Activated CD4-positive, alpha-beta memory T cell treated with anti-CD3 and anti-CD28 coated beads for 36 hours (primary cell): ENCODE measurements at regions of chr5 and their contacts with region 1.

Region 1: GRCh38 chr5:180802325-180803180 is at the start of gene MGAT1:
- DNase-seq: peak; percentile 84
- H3K4me3 Mint-ChIP-seq: peak within 1 kb of the TSS; percentile 85
- H3K27ac Mint-ChIP-seq: peak within 1 kb of the TSS; percentile 96
- H3K4me1 Mint-ChIP-seq: peaks cover 75% of the 10 kb centered on the region
- H3K27me3 Mint-ChIP-seq: no peaks in the 10 kb centered on the region
- total RNA-seq, gene MGAT1: 101 to 106 TPM

Region 2: GRCh38 chr5:180825768-180826525 is 23.4 kb after region 1 on chr5:
- CTCF ChIA-PET with region 1: interaction called, 32 read pairs
- POLR2A ChIA-PET with region 1: interaction called, 44 read pairs
- intact Hi-C with region 1: no loop called
- DNase-seq: peak; percentile 79
- H3K4me3 Mint-ChIP-seq: no peak overlapping the region
- H3K27ac Mint-ChIP-seq: peak overlapping the region; percentile 64
- H3K4me1 Mint-ChIP-seq: peaks cover 34% of the 10 kb centered on the region
- H3K27me3 Mint-ChIP-seq: no peaks in the 10 kb centered on the region

Region 3: GRCh38 chr5:180831139-180832048 is 28.8 kb after region 1 on chr5:
- CTCF ChIA-PET with region 1: interaction called, 32 read pairs
- POLR2A ChIA-PET with region 1: interaction called, 44 read pairs
- intact Hi-C with region 1: loop called (anchors 1 kb)
- DNase-seq: peak; percentile 86
- H3K4me3 Mint-ChIP-seq: peak overlapping the region; percentile 99
- H3K27ac Mint-ChIP-seq: peak overlapping the region; percentile 99
- H3K4me1 Mint-ChIP-seq: peaks cover 39% of the 10 kb centered on the region
- H3K27me3 Mint-ChIP-seq: no peaks in the 10 kb centered on the region